ENCODE measurements at regions of chr12 and their contacts with region 1.

Region 1: DNA sequence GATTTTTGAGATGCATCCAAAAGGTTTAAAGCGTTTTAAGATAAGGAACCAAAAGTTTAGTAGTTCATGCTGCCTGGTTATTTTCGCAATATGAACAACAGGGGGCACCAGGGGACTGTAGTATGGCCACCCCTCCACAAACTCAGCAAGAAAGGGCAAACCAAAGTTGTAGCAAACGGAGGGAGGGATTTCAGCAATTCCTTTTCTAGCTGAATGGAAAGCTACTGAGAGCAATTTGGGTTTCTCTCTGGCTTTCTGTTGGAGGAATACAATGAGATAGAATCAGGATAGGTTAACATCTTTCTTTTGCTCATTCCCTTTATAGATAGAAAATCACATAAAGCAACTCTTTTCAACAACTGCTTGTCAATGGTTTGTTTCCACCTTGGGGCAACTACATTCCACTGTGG is 62.5 kb downstream of the DRAM1 start:
- DNase-seq: no peak
- ATAC-seq: peak; percentile 32
- H3K4me3 ChIP-seq: no peak overlapping the region
- H3K27ac ChIP-seq: peak overlapping the region; percentile 62
- H3K4me1 ChIP-seq: peaks cover 73% of the 10 kb centered on the region
- H3K27me3 ChIP-seq: no peaks in the 10 kb centered on the region
- CTCF ChIP-seq: peak; percentile 69 to 80 (median 70)
- EP300 ChIP-seq: no peak
- POLR2A ChIP-seq: no peak
- RAD21 ChIP-seq: peak; percentile 97

Region 2: GRCh38 chr12:101866615-101867373 is 73.1 kb before region 1 on chr12:
- CTCF ChIA-PET with region 1: no interaction called
- POLR2A ChIA-PET with region 1: no interaction called
- RAD21 ChIA-PET with region 1: no interaction called
- SMC1A ChIA-PET with region 1: no interaction called
- in situ Hi-C with region 1: no loop called
- intact Hi-C with region 1: no loop called
- DNase-seq: no peak
- ATAC-seq: no peak
- H3K4me3 ChIP-seq: no peak overlapping the region
- H3K27ac ChIP-seq: no peak overlapping the region
- H3K4me1 ChIP-seq: no peaks in the 10 kb centered on the region
- H3K27me3 ChIP-seq: no peaks in the 10 kb centered on the region
- CTCF ChIP-seq: no peak
- EP300 ChIP-seq: no peak
- POLR2A ChIP-seq: no peak
- RAD21 ChIP-seq: no peak

Region 3: GRCh38 chr12:101919447-101919846 is 20.4 kb before region 1 on chr12:
- CTCF ChIA-PET with region 1: interaction called, 72 read pairs
- POLR2A ChIA-PET with region 1: interaction called, 5 read pairs
- RAD21 ChIA-PET with region 1: interaction called, 23 read pairs
- SMC1A ChIA-PET with region 1: interaction called, 98 read pairs
- in situ Hi-C with region 1: no loop called
- intact Hi-C with region 1: loop called (anchors 1 kb)
- DNase-seq: no peak
- ATAC-seq: no peak
- H3K4me3 ChIP-seq: no peak overlapping the region
- H3K27ac ChIP-seq: no peak overlapping the region
- H3K4me1 ChIP-seq: peaks cover 26% of the 10 kb centered on the region
- H3K27me3 ChIP-seq: no peaks in the 10 kb centered on the region
- CTCF ChIP-seq: no peak
- EP300 ChIP-seq: no peak
- POLR2A ChIP-seq: no peak
- RAD21 ChIP-seq: no peak

Region 4: GRCh38 chr12:102061560-102062418 is 121.9 kb after region 1 on chr12 and contains the start of gene WASHC3:
- CTCF ChIA-PET with region 1: interaction called, 6 read pairs
- POLR2A ChIA-PET with region 1: interaction called, 6 read pairs
- RAD21 ChIA-PET with region 1: interaction called, 15 read pairs
- SMC1A ChIA-PET with region 1: interaction called, 11 read pairs
- in situ Hi-C with region 1: no loop called
- intact Hi-C with region 1: loop called (anchors 5 kb)
- DNase-seq: peak; percentile 74
- ATAC-seq: peak; percentile 95
- H3K4me3 ChIP-seq: peak within 1 kb of the TSS; percentile 73
- H3K27ac ChIP-seq: peak within 1 kb of the TSS; percentile 96
- H3K4me1 ChIP-seq: peaks cover 10% of the 10 kb centered on the region; the same call in 1 of the 2 replicates
- H3K27me3 ChIP-seq: no peaks in the 10 kb centered on the region
- CTCF ChIP-seq: no peak
- EP300 ChIP-seq: no peak
- POLR2A ChIP-seq: peak; percentile 76
- RAD21 ChIP-seq: no peak
- polyA plus RNA-seq, gene WASHC3: 87.0 to 106 TPM

Region 5: GRCh38 chr12:102300824-102301461 is 361.1 kb after region 1 on chr12:
- CTCF ChIA-PET with region 1: interaction called, 6 read pairs
- POLR2A ChIA-PET with region 1: no interaction called
- RAD21 ChIA-PET with region 1: interaction called, 7 read pairs
- SMC1A ChIA-PET with region 1: interaction called, 16 read pairs
- in situ Hi-C with region 1: no loop called
- intact Hi-C with region 1: loop called (anchors 10 kb)
- DNase-seq: peak; percentile 61
- ATAC-seq: peak; percentile 98
- H3K4me3 ChIP-seq: no peak overlapping the region
- H3K27ac ChIP-seq: no peak overlapping the region
- H3K4me1 ChIP-seq: no peaks in the 10 kb centered on the region
- H3K27me3 ChIP-seq: no peaks in the 10 kb centered on the region
- CTCF ChIP-seq: peak; percentile 41 to 47 (median 42); a peak in 4 of 6 replicates
- EP300 ChIP-seq: no peak
- POLR2A ChIP-seq: no peak
- RAD21 ChIP-seq: peak; percentile 57

Region 6: DNA sequence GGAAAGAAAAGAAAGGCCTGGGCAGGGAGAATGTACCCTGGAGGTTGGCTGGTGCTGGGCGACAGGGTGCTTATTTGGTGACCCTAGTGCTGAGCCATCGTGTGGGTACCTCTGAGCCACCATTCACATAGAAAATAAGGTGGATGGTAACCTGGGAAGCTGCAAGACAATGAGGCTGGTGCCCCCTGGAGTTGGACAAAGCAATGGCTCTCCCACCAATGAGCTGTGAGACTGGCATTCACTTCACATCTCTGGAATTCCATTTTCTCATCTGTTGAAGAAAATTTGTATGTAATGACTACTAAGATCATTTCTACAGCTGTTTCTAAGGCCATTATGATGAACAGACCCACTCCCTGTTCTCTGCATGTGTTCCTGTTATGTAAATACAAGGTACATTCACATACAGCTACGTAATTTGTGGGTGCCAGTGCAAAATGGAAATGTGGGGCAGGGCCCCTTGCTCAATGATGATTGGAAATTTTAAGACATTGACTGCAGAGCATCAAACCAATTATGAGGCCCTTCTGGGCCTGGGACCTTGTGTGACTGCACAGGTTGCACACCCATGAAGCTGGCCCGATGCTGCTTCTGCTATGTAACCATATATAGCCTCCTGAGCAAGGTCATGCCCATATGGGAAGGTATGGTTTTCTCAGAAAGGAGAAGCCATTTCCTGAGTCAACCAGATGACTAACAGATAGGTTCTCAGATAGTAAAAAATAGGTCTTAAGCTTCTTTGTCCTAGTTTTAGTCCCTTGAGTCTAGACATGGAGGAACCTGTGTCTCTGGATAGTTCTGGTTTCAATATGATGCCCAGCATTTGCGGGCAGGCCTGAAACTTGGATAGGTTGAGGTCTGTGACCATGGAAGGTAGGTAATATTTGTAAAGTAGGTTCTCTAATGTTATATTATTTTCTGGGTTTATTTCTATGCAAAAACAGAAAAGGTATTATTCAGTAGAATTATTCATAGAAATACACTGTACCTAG is 603.9 kb after region 1 on chr12:
- CTCF ChIA-PET with region 1: interaction called, 15 read pairs
- POLR2A ChIA-PET with region 1: no interaction called
- RAD21 ChIA-PET with region 1: interaction called, 26 read pairs
- SMC1A ChIA-PET with region 1: interaction called, 7 read pairs
- in situ Hi-C with region 1: no loop called
- intact Hi-C with region 1: no loop called
- DNase-seq: no peak
- ATAC-seq: peak; percentile 80
- H3K4me3 ChIP-seq: no peak overlapping the region
- H3K27ac ChIP-seq: no peak overlapping the region
- H3K4me1 ChIP-seq: peaks cover 6% of the 10 kb centered on the region
- H3K27me3 ChIP-seq: no peaks in the 10 kb centered on the region
- CTCF ChIP-seq: peak; percentile 42 to 46 (median 45); a peak in 5 of 6 replicates
- EP300 ChIP-seq: no peak
- POLR2A ChIP-seq: no peak
- RAD21 ChIP-seq: peak; percentile 62

Region 7: DNA sequence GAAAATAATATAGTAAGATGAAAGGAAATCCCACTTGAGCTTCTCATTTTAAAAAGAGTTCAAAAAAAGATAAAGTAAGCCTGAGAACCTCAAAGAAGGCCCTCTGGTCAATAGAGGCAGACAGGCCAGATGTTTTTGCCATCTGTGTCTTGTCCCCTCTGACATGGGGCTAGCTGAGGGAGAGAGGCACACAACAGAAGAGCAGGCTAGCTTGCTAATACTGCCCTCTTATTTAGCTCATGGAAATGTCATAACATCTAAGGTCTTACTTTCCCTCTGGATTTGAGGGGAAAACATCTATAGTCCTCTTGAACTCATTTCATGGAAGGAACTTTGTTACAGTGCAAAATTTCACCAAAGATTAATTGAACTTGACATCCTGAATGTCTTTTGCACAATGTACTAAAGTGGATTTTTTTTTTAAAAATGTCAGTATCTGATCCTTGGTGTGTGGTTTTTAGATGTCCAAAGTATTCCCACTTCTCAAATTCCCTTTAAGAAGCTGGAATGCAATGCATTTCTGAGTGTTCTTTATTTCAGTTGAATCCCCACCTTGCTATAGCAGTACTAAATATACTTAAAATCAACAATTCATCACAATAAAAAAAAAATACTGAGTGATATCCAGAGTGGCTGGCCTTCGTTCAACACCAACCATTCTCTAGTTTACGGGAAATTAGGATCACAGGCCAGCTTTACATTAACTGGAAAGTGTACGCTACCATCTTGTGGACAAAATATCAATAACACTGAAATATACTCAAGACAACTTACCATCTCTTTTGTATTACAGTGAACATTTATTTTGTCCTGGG is 800.5 kb after region 1 on chr12:
- CTCF ChIA-PET with region 1: interaction called, 38 read pairs
- POLR2A ChIA-PET with region 1: interaction called, 4 read pairs
- RAD21 ChIA-PET with region 1: interaction called, 36 read pairs
- SMC1A ChIA-PET with region 1: interaction called, 52 read pairs
- in situ Hi-C with region 1: loop called (anchors 10 kb)
- intact Hi-C with region 1: no loop called
- DNase-seq: no peak
- ATAC-seq: peak; percentile 64
- H3K4me3 ChIP-seq: no peak overlapping the region
- H3K27ac ChIP-seq: no peak overlapping the region
- H3K4me1 ChIP-seq: peaks cover 1% of the 10 kb centered on the region
- H3K27me3 ChIP-seq: no peaks in the 10 kb centered on the region
- CTCF ChIP-seq: peak; percentile 17 to 64 (median 37); a peak in 3 of 6 replicates
- EP300 ChIP-seq: no peak
- POLR2A ChIP-seq: no peak
- RAD21 ChIP-seq: peak; percentile 74

Region 8: GRCh38 chr12:102851246-102851645 is 911.4 kb after region 1 on chr12:
- CTCF ChIA-PET with region 1: no interaction called
- POLR2A ChIA-PET with region 1: no interaction called
- RAD21 ChIA-PET with region 1: no interaction called
- SMC1A ChIA-PET with region 1: no interaction called
- in situ Hi-C with region 1: no loop called
- intact Hi-C with region 1: no loop called
- DNase-seq: no peak
- ATAC-seq: no peak
- H3K4me3 ChIP-seq: no peak overlapping the region
- H3K27ac ChIP-seq: no peak overlapping the region
- H3K4me1 ChIP-seq: no peaks in the 10 kb centered on the region
- H3K27me3 ChIP-seq: peaks cover 0 to 3% of the 10 kb centered on the region in 2 experiments; a peak in 3 of 4 replicates
- CTCF ChIP-seq: no peak
- EP300 ChIP-seq: no peak
- POLR2A ChIP-seq: no peak
- RAD21 ChIP-seq: no peak

Region 9: GRCh38 chr12:103102225-103102744 is 1162.4 kb after region 1 on chr12:
- CTCF ChIA-PET with region 1: no interaction called
- POLR2A ChIA-PET with region 1: no interaction called
- RAD21 ChIA-PET with region 1: no interaction called
- SMC1A ChIA-PET with region 1: no interaction called
- in situ Hi-C with region 1: loop called (anchors 10 kb)
- intact Hi-C with region 1: no loop called
- DNase-seq: peak; percentile 72
- ATAC-seq: peak; percentile 91
- H3K4me3 ChIP-seq: no peak overlapping the region
- H3K27ac ChIP-seq: peak overlapping the region; percentile 82
- H3K4me1 ChIP-seq: peaks cover 29% of the 10 kb centered on the region
- H3K27me3 ChIP-seq: no peaks in the 10 kb centered on the region
- CTCF ChIP-seq: no peak
- EP300 ChIP-seq: peak; percentile 73 to 89; a peak in 3 of 4 replicates
- POLR2A ChIP-seq: no peak
- RAD21 ChIP-seq: peak; percentile 22; the same call in 1 of the 2 replicates

Measured in GM12878 (cell line).